ENCODE measurements at regions of chr4 and their contacts with region 1.

Region 1: GRCh38 chr4:101187841-101188240 is 159.5 kb downstream of the PPP3CA start:
- DNase-seq: no peak
- H3K4me3 ChIP-seq: no peak overlapping the region
- H3K27ac ChIP-seq: no peak overlapping the region
- H3K4me1 ChIP-seq: peaks cover 4 to 14% of the 10 kb centered on the region in 2 donors
- H3K27me3 ChIP-seq: no peaks in the 10 kb centered on the region
- CTCF ChIP-seq: no peak

Region 2: DNA sequence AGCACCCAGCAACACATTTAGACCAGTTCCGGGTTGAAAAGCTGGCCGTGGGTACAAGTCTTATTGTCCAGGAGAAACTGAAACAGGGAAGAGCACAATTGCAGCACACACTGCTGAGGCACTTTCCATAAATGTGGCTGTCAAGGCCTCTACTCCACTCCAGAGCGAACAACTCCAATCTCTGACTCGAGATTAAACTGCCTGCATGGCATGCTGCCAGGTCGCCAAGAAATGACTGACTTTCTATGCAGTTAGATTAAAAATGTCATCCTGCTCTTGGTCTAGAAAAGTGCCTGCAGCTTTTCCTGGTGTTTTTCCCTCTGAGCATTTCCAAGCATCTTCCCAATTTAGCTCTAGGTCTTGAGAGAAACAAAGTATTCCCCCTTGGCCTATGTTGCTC is 409.4 kb before region 1 on chr4:
- intact Hi-C with region 1: no loop called
- DNase-seq: no peak
- H3K4me3 ChIP-seq: no peak overlapping the region
- H3K27ac ChIP-seq: no peak overlapping the region
- H3K4me1 ChIP-seq: no peaks in the 10 kb centered on the region
- H3K27me3 ChIP-seq: no peaks in the 10 kb centered on the region
- CTCF ChIP-seq: no peak

Region 3: DNA sequence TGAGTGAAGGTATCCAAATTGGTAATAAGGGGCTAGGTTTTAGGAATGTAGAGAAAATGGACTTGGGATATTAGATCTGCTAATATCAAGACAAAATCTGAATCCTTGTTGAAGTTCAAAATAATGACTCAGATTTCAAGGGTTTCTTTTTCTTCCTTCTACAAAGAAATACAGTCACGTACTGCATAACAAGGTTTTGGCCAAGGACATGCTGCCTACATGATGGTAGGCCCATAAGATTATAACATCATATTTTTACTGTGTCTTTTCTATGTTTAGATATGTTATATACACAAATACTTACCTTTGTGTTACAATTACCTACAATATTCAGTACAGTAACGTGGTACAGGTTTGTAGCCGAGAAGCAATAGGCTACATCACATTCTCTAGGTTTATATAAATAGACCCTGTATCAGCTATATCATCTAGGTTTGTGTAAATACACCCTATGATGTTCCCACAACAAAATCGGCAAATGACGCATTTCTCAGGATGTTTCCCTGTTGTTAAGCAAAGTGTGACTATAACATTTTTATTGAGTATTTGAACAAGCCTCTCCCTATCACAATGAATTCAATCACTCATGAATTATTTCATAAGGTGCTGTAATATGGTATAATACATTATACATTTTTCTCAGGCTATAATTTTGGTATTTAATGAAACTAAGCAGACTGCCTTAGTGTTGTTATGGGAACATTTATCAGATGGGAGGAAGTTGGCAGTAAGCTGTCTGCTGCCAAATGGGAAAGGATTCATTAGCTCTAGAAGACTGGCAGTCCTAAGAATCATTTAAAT is 26.8 kb before region 1 on chr4:
- intact Hi-C with region 1: loop called (anchors 2 kb)
- DNase-seq: no peak
- H3K4me3 ChIP-seq: no peak overlapping the region
- H3K27ac ChIP-seq: no peak overlapping the region
- H3K4me1 ChIP-seq: peaks cover 0 to 10% of the 10 kb centered on the region in 2 donors
- H3K27me3 ChIP-seq: no peaks in the 10 kb centered on the region
- CTCF ChIP-seq: no peak

Region 4: DNA sequence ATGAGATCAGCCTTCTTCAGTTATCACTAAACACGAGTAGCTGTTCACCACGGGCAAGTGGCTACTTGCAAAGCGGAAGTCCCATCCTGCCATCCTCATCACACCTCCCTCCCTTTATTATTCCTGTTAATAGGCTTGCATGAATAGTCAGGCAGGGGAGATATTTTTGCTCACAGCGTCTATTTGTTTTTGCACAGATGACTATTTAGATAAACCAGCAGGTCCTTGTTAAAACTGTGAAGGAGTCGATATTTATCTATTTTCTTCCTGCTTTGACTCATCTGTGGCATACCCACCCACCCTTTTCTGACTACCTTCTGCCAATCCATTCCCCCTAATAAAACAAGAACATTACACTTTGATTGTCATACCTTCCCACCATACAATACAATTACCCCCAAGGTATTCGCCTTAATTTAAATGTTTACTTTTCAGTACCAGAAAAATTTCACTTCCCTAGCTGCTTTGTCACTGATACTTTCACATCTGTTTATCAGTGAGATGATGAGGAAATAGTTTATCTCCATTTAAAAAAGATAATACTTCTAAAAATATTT is 506.1 kb after region 1 on chr4:
- intact Hi-C with region 1: no loop called
- DNase-seq: no peak
- H3K4me3 ChIP-seq: no peak overlapping the region
- H3K27ac ChIP-seq: no peak overlapping the region
- H3K4me1 ChIP-seq: no peaks in the 10 kb centered on the region
- H3K27me3 ChIP-seq: no peaks in the 10 kb centered on the region
- CTCF ChIP-seq: no peak

Measured in ascending aorta (tissue), 2 donors.